KBM-7 (cell line): ENCODE measurements at regions of chr15 and their contacts with region 1.

Region 1: DNA sequence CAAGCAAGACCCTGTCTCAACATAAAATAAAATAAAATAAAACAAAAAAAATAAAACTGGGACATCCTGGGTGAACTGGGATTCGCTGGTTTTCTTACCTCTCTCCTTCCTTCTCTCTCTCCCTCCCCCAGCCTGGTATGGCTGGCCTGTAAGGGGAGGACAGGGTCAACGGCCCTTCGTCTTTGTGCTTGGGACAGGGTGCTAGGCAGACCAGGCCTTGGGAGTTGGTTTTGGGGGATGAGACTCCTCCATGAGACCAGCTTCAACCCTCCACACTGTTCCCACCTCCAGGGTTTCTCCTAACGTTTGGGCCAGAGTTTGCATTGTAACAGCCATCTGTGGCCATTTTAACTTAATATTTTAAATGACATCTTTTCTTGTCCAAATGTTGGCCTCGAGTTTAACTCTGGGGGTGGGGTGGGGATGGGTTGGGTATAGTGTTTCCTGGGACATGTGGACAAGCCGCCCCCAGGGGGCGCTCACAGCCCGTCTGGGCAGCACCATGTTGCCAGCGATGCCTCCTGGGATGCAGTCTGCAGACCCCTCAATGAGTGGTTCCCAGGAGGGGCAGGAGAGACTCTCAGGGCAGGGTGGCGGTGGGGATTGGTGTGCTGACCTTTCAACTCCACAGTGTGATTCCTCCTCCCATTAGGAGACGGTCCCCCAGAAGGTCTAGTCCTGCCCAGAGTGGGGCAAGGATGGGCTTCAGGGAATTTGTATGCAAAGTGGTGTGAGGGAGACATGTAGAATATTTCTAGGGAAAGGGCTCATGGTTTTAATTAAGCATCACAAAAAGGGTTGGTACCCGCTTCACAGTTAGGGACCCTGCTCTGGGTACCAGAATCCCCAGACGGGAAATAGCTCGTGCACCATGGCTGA is 37.7 kb upstream of the LCTL start:
- DNase-seq: peak; percentile 88

Region 2: GRCh38 chr15:66841953-66842681 is 238.6 kb after region 1 on chr15:
- in situ Hi-C with region 1: loop called (anchors 10 kb)
- DNase-seq: peak; percentile 50